GM12878 (cell line): ENCODE measurements at regions of chr13 and their contacts with region 1.

Region 1: GRCh38 chr13:81171065-81171647 is 830.2 kb upstream of the SPRY2 start:
- DNase-seq: no peak
- ATAC-seq: peak; percentile 76
- H3K4me3 ChIP-seq: no peak overlapping the region
- H3K27ac ChIP-seq: no peak overlapping the region
- H3K4me1 ChIP-seq: no peaks in the 10 kb centered on the region
- H3K27me3 ChIP-seq: no peaks in the 10 kb centered on the region
- CTCF ChIP-seq: peak; percentile 34 to 56 (median 35); a peak in 4 of 6 replicates
- EP300 ChIP-seq: no peak
- POLR2A ChIP-seq: no peak
- RAD21 ChIP-seq: peak; percentile 49

Region 2: DNA sequence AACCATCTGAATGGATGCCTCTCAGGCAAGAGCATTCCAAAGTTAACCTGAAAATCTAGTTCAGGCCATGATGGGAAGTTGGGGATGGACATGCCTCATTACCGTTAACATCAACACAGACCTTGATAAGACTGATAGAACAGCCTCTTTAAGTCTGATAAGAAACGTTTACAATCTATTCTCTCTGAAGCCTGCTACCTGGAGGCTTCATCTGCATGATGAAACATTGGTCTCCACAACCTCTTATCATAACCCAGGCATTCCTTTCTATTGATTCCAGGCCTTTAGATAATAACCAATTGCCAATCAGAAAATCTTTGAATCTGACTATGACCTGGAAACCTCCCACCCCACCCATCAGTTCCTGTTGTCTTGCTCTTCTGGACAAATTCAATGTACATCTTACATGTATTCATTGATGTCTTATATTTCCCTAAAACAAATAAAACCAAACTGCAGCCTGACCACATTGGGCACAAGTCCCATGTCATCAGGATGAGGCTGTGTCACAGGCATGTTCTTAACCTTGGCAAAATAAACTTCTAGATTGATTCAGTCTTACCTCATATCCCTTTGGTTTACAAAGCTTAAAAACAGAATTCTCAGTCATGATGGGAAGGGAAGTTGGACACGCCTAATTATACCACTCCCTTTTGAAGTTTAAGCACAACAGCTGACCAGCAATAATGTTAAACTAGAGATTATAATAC is 13.6 kb after region 1 on chr13:
- CTCF ChIA-PET with region 1: interaction called, 19 read pairs
- POLR2A ChIA-PET with region 1: no interaction called
- RAD21 ChIA-PET with region 1: interaction called, 5 read pairs
- SMC1A ChIA-PET with region 1: interaction called, 6 read pairs
- in situ Hi-C with region 1: no loop called
- intact Hi-C with region 1: no loop called
- DNase-seq: no peak
- ATAC-seq: no peak
- H3K4me3 ChIP-seq: no peak overlapping the region
- H3K27ac ChIP-seq: no peak overlapping the region
- H3K4me1 ChIP-seq: no peaks in the 10 kb centered on the region
- H3K27me3 ChIP-seq: no peaks in the 10 kb centered on the region
- CTCF ChIP-seq: no peak
- EP300 ChIP-seq: no peak
- POLR2A ChIP-seq: no peak
- RAD21 ChIP-seq: no peak

Region 3: DNA sequence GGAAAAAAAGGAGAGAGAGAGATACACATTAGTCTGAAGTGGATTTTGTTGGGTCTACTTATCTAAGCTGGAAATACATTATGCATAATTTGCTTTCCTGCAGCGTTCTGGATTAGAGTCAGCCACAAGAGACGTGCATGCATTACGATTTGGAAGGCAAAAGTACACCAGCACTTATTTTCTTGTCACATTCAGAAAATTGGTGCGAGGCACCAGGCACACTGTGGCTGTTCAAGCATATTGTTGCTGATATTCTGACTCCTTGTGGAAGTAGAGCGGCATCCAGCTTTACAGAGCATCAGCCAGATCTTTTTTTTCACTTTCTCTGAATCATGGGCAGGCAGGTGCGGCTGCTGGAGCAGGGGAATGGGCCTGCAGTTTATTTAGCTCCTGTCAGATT is 75.4 kb after region 1 on chr13:
- CTCF ChIA-PET with region 1: no interaction called
- POLR2A ChIA-PET with region 1: no interaction called
- RAD21 ChIA-PET with region 1: no interaction called
- SMC1A ChIA-PET with region 1: no interaction called
- in situ Hi-C with region 1: no loop called
- intact Hi-C with region 1: no loop called
- DNase-seq: no peak
- ATAC-seq: no peak; the same call in 2 of the 3 replicates
- H3K4me3 ChIP-seq: no peak overlapping the region
- H3K27ac ChIP-seq: no peak overlapping the region
- H3K4me1 ChIP-seq: no peaks in the 10 kb centered on the region
- H3K27me3 ChIP-seq: no peaks in the 10 kb centered on the region
- CTCF ChIP-seq: no peak
- EP300 ChIP-seq: no peak
- POLR2A ChIP-seq: no peak
- RAD21 ChIP-seq: no peak

Region 4: DNA sequence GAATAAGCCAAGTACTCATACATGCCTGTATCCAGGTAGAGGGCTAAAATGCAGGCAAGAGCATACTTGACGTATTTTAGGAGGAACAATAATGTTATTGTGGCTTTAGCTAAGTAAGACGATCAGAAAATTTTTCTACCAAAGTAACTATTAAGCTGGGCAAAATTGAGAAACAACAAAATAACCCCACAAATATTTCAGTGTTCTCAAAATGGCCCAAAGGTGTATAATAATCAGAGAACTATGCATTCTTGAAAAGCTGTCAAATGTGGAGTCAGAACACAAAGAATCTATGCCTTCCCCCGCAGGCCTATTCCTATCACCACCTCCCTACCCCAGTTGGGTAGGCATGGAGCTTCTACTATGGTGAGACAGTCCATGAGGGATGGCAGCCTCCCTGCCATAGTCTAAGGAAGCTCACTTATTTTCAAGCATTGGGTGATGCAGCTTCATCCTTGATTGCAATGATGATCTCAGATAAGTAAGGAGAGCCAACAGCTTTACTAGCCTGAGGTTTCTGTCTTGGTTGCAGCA is 302.3 kb after region 1 on chr13:
- CTCF ChIA-PET with region 1: interaction called, 10 read pairs
- POLR2A ChIA-PET with region 1: no interaction called
- RAD21 ChIA-PET with region 1: interaction called, 4 read pairs
- SMC1A ChIA-PET with region 1: interaction called, 5 read pairs
- in situ Hi-C with region 1: no loop called
- intact Hi-C with region 1: no loop called
- DNase-seq: no peak
- ATAC-seq: no peak
- H3K4me3 ChIP-seq: no peak overlapping the region
- H3K27ac ChIP-seq: no peak overlapping the region
- H3K4me1 ChIP-seq: no peaks in the 10 kb centered on the region
- H3K27me3 ChIP-seq: no peaks in the 10 kb centered on the region
- CTCF ChIP-seq: no peak
- EP300 ChIP-seq: no peak
- POLR2A ChIP-seq: no peak
- RAD21 ChIP-seq: no peak

Region 5: DNA sequence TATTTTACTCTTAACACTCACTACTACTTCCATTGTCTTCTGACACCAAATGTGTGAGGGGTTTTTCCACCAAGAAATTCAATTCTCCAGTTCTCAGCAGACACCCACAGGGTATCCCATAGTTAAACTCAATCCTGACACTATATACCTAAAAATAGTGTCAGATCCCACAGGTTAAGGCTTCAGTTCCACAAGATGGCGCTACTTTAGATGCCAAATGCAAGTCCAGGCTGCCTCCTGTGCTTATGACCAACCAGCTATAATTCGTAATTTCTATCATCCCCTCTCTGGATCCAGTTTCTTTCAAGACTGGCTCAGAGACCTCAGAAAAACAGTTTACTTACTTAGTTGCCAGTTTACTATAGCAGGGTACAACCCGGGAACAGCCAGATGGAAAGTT is 316.0 kb after region 1 on chr13:
- CTCF ChIA-PET with region 1: interaction called, 38 read pairs
- POLR2A ChIA-PET with region 1: no interaction called
- RAD21 ChIA-PET with region 1: interaction called, 30 read pairs
- SMC1A ChIA-PET with region 1: interaction called, 39 read pairs
- in situ Hi-C with region 1: no loop called
- intact Hi-C with region 1: loop called (anchors 5 kb)
- DNase-seq: no peak
- ATAC-seq: peak; percentile 60
- H3K4me3 ChIP-seq: no peak overlapping the region
- H3K27ac ChIP-seq: no peak overlapping the region
- H3K4me1 ChIP-seq: no peaks in the 10 kb centered on the region
- H3K27me3 ChIP-seq: no peaks in the 10 kb centered on the region
- CTCF ChIP-seq: peak; percentile 6 to 39 (median 39); a peak in 2 of 6 replicates
- EP300 ChIP-seq: no peak
- POLR2A ChIP-seq: no peak
- RAD21 ChIP-seq: no peak

Region 6: GRCh38 chr13:81639984-81640582 is 468.9 kb after region 1 on chr13:
- CTCF ChIA-PET with region 1: interaction called, 12 read pairs
- POLR2A ChIA-PET with region 1: no interaction called
- RAD21 ChIA-PET with region 1: interaction called, 4 read pairs
- SMC1A ChIA-PET with region 1: interaction called, 5 read pairs
- in situ Hi-C with region 1: no loop called
- intact Hi-C with region 1: no loop called
- DNase-seq: no peak
- ATAC-seq: peak; percentile 58
- H3K4me3 ChIP-seq: no peak overlapping the region
- H3K27ac ChIP-seq: no peak overlapping the region
- H3K4me1 ChIP-seq: no peaks in the 10 kb centered on the region
- H3K27me3 ChIP-seq: no peaks in the 10 kb centered on the region
- CTCF ChIP-seq: peak; percentile 38 to 52 (median 46); a peak in 4 of 6 replicates
- EP300 ChIP-seq: no peak
- POLR2A ChIP-seq: no peak
- RAD21 ChIP-seq: no peak

Region 7: DNA sequence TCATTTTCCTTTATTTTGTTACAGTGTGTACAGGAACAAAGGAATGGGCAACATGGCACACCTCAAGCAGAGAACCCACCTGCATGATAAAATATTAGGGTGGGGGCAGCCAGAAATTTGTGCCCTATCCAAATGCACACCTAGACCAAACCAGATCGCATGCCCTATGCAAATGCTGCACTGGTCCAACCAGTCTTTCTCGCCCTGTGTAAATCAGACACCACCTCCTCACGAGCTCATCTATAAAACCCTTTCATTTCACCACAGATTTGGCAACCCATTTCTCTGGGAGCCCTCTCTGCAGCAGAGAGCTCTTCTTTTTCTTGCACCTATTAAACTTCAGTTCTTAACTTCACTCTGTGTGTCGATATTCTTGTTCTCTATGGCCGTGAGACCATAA is 1151.9 kb after region 1 on chr13:
- CTCF ChIA-PET with region 1: interaction called, 17 read pairs
- POLR2A ChIA-PET with region 1: no interaction called
- RAD21 ChIA-PET with region 1: interaction called, 3 read pairs
- SMC1A ChIA-PET with region 1: interaction called, 6 read pairs
- in situ Hi-C with region 1: loop called (anchors 10 kb)
- intact Hi-C with region 1: no loop called
- DNase-seq: no peak
- ATAC-seq: no peak
- H3K4me3 ChIP-seq: no peak overlapping the region
- H3K27ac ChIP-seq: no peak overlapping the region
- H3K4me1 ChIP-seq: no peaks in the 10 kb centered on the region
- H3K27me3 ChIP-seq: no peaks in the 10 kb centered on the region
- CTCF ChIP-seq: no peak
- EP300 ChIP-seq: no peak
- POLR2A ChIP-seq: no peak
- RAD21 ChIP-seq: no peak